PC-9 (cell line): ENCODE measurements at regions of chr14 and their contacts with region 1.

Region 1: DNA sequence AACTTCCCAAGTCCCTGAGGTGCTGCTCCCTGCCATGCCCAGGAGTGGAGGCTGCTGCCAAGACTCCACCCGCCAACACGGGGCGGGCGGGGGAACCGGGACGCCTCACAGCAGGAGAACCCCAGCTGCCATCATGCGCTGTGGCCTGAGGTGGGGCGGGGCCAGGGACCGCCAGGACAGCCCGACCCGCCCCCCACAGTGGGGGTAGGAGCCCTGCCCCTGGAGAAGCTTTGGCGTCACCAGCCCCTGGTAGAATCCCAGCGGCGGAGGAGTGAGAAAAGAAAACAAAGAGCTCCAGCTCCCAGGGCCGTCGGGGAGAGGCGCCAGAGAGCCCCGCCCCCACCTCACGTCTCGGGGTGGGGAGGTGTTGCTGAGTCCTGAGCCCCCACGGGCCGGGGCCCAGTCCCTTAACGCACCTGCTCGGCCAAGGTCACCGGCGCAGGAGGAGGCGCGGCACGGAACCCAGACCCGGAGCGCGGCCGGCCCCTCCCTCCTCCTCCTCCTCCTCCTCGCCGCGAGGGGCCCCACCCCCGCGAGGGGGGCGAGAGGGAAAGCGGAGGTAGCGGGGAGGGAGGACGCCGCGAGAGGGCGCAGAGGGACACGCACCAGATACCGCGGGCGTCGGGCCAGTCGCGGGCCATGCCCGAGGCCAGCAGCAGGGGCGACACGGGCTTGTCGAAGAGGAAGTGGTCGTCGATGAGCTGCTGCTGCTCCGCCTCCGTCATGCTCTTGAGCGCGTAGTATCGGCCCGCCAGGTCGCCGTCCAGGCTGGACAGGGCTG is 1.8 kb downstream of the CKB start:
- DNase-seq: peak; percentile 82 to 95
- H3K4me3 ChIP-seq: peak overlapping the region; percentile 66
- H3K27ac ChIP-seq: peak overlapping the region; percentile 16
- H3K4me1 ChIP-seq: peaks cover 11% of the 10 kb centered on the region
- H3K27me3 ChIP-seq: no peaks in the 10 kb centered on the region
- CTCF ChIP-seq: peak; percentile 81

Region 2: GRCh38 chr14:103451401-103451800 is 69.4 kb before region 1 on chr14:
- CTCF ChIA-PET with region 1: interaction called, 10 read pairs
- POLR2A ChIA-PET with region 1: no interaction called
- intact Hi-C with region 1: no loop called
- DNase-seq: no peak
- H3K4me3 ChIP-seq: no peak overlapping the region
- H3K27ac ChIP-seq: no peak overlapping the region
- H3K4me1 ChIP-seq: peaks cover 5% of the 10 kb centered on the region; the same call in 1 of the 2 replicates
- H3K27me3 ChIP-seq: no peaks in the 10 kb centered on the region
- CTCF ChIP-seq: no peak

Region 3: DNA sequence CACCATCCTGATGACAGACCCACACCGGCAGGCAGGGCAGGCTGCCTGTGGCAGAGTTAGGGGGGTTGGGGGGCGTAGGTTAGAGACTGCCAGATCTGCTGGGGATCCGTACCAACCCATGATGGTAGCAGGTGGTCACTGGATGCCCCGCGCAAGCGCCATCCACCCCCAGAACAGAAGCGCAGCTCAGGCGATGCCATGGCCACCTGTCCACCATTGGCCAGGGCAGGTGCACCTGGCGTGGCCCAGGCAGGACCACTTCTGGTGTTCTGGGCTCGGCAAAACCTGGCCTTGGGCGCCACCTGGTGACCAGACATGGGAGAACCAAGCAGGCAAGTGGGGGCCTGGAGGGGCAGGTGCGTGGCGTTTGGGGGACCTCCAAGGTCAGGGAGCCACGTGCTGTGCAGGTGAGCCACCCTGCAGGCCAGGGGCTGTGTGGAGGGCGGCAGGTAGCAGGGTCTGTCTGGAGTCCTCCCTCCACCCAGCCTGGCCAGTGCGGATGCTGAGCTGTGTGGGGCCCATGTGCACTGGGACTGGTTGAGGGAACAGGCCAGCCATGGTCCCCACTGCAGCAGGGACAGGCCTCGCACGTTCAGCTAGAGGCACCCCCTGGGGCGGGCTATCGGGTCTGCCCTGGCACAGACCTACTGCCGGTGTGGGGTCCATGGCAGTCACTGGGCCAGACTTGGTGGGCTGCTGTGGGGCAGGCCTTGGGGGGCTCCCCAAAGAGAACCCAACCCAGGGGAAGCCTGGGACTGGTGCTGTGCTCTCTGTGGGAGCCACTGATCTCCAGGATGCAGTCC is 26.0 kb after region 1 on chr14:
- CTCF ChIA-PET with region 1: interaction called, 15 read pairs
- POLR2A ChIA-PET with region 1: no interaction called
- intact Hi-C with region 1: loop called (anchors 1 kb)
- DNase-seq: peak; percentile 72 to 89
- H3K4me3 ChIP-seq: no peak overlapping the region
- H3K27ac ChIP-seq: no peak overlapping the region
- H3K4me1 ChIP-seq: peaks cover 23% of the 10 kb centered on the region
- H3K27me3 ChIP-seq: no peaks in the 10 kb centered on the region
- CTCF ChIP-seq: peak; percentile 100

Region 4: DNA sequence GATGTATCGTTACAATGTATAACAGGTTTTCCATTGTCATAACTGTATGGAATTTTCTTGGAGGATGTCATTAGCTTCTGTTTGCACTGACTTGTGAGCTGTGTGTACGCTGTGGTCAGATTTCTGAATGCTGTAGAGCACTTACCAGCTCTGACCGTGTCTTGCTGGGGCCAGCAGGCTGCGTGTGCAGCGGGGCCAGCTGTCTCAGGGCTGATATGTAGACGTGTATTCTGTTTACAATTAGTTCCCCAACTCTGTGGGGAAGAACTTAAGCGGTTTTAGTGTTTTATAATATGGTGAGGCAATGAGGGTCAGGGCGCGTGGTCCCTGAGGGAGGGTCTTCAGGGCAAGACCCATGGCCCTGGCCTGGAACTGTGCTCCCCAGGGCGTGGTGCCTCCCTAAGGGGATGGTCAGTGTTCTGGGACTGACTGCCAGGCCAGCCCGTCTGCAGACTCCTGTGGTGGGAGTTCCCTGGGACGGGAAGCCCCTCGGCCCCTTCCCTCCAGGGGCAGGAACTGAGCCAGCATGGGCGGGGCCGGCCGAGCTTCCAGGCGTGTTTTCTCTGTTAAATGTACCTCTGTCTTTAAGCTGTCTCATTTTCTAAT is 175.7 kb after region 1 on chr14:
- CTCF ChIA-PET with region 1: no interaction called
- POLR2A ChIA-PET with region 1: no interaction called
- intact Hi-C with region 1: no loop called
- DNase-seq: no peak
- H3K4me3 ChIP-seq: no peak overlapping the region
- H3K27ac ChIP-seq: no peak overlapping the region
- H3K4me1 ChIP-seq: peaks cover 15% of the 10 kb centered on the region
- H3K27me3 ChIP-seq: no peaks in the 10 kb centered on the region
- CTCF ChIP-seq: no peak

Region 5: DNA sequence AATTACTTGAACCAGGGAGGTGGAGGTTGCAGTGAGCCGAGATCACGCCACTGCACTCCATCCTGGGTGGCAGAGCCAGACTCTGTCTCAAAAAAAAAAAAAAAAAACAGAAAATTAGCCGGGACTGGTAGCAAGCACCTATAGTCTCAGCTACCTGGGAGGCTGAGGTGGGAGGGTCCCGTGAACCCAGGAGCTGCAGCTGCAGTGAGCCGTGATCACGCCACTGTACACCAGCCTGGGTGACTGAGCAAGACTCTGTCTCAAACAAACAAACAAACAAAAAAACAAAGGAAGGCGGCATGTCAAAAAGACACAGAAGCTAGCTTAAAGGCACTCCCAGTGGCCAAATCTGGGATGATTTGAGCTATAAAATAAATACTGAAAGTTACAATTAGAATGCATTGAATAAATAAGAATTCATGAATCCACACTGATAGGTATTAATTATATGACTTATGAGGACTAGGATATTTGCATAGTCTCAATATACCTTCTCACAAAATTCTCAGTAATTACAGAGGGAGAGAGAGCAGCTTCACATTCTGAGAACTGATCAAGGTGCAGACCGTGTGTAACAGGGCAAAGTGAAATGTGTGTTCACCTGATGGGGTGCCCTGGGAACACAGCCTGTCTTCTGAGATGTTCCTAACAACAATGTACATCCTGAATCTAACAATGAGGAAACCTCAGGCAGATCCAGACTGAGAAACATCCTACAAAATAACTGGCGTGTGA is 1587.1 kb after region 1 on chr14:
- CTCF ChIA-PET with region 1: no interaction called
- POLR2A ChIA-PET with region 1: no interaction called
- intact Hi-C with region 1: no loop called
- DNase-seq: no peak
- H3K4me3 ChIP-seq: no peak overlapping the region
- H3K27ac ChIP-seq: no peak overlapping the region
- H3K4me1 ChIP-seq: peaks cover 6% of the 10 kb centered on the region
- H3K27me3 ChIP-seq: no peaks in the 10 kb centered on the region
- CTCF ChIP-seq: no peak